ENCODE measurements at regions of chr7 and their contacts with region 1.

Region 1: DNA sequence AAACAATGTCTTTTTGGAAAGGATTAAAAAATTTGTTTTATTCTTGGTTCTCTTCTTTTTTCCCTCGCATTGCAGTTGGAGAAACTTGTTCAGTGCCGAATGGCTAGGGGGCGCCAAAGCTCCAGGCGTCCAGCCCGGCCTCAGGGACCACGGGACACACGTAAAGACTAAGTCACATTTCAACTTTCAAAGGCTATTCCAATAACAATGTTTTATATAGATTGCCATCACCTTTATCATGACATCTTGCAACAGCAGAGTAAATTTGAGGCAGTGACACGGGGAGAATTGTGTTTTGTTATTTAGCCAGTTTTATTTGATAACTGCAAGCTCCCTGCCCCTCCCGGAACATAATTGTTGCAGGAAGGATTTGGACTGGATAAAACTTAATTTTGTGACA is 2.2 kb upstream of the IGFBP3 start:
- DNase-seq: peak; percentile 86 to 94
- ATAC-seq: peak; percentile 82
- H3K4me3 ChIP-seq: peak overlapping the region in 1 of 2 donors; percentile 39
- H3K27ac ChIP-seq: no peak overlapping the region
- H3K4me1 ChIP-seq: peaks cover 0 to 4% of the 10 kb centered on the region in 2 donors
- H3K27me3 ChIP-seq: no peaks in the 10 kb centered on the region

Region 2: GRCh38 chr7:45689011-45689796 is 234.1 kb before region 1 on chr7:
- intact Hi-C with region 1: no loop called
- DNase-seq: no peak
- ATAC-seq: no peak
- H3K4me3 ChIP-seq: no peak overlapping the region
- H3K27ac ChIP-seq: no peak overlapping the region
- H3K4me1 ChIP-seq: no peaks in the 10 kb centered on the region
- H3K27me3 ChIP-seq: no peaks in the 10 kb centered on the region

Region 3: GRCh38 chr7:46003896-46004875 is 80.9 kb after region 1 on chr7:
- intact Hi-C with region 1: no loop called
- DNase-seq: no peak
- ATAC-seq: no peak
- H3K4me3 ChIP-seq: no peak overlapping the region
- H3K27ac ChIP-seq: no peak overlapping the region
- H3K4me1 ChIP-seq: no peaks in the 10 kb centered on the region
- H3K27me3 ChIP-seq: no peaks in the 10 kb centered on the region

Region 4: GRCh38 chr7:46145412-46145811 is 222.1 kb after region 1 on chr7:
- intact Hi-C with region 1: loop called (anchors 2 to 5 kb)
- DNase-seq: peak in 1 of 2 donors; percentile 59
- ATAC-seq: peak; percentile 62
- H3K4me3 ChIP-seq: no peak overlapping the region
- H3K27ac ChIP-seq: no peak overlapping the region
- H3K4me1 ChIP-seq: peaks cover 11 to 23% of the 10 kb centered on the region in 2 donors
- H3K27me3 ChIP-seq: no peaks in the 10 kb centered on the region

Region 5: GRCh38 chr7:46352004-46352954 is 429.0 kb after region 1 on chr7:
- intact Hi-C with region 1: loop called (anchors 1 to 2 kb)
- DNase-seq: no peak
- ATAC-seq: peak; percentile 56
- H3K4me3 ChIP-seq: no peak overlapping the region
- H3K27ac ChIP-seq: no peak overlapping the region
- H3K4me1 ChIP-seq: no peaks in the 10 kb centered on the region
- H3K27me3 ChIP-seq: no peaks in the 10 kb centered on the region

Region 6: GRCh38 chr7:46752881-46753366 is 829.6 kb after region 1 on chr7:
- intact Hi-C with region 1: loop called (anchors 5 to 10 kb)
- DNase-seq: no peak
- ATAC-seq: peak; percentile 85
- H3K4me3 ChIP-seq: no peak overlapping the region
- H3K27ac ChIP-seq: peak overlapping the region; percentile 36 to 62
- H3K4me1 ChIP-seq: peaks cover 9 to 16% of the 10 kb centered on the region in 2 donors
- H3K27me3 ChIP-seq: no peaks in the 10 kb centered on the region

Region 7: GRCh38 chr7:47254081-47255006 is 1331.1 kb after region 1 on chr7:
- intact Hi-C with region 1: loop called (anchors 5 kb)
- DNase-seq: peak; percentile 85 to 94
- ATAC-seq: peak; percentile 94
- H3K4me3 ChIP-seq: peak overlapping the region; percentile 27 to 59
- H3K27ac ChIP-seq: no peak overlapping the region
- H3K4me1 ChIP-seq: no peaks in the 10 kb centered on the region
- H3K27me3 ChIP-seq: no peaks in the 10 kb centered on the region